Activated naive CD4-positive, alpha-beta T cell treated with anti-CD3 and anti-CD28 coated beads, Interleukin-2, amount 10 ng/mL, durations not matched to agents 7 days and 5 days (primary cell): ENCODE measurements at regions of chr4 and their contacts with region 1.

Region 1: DNA sequence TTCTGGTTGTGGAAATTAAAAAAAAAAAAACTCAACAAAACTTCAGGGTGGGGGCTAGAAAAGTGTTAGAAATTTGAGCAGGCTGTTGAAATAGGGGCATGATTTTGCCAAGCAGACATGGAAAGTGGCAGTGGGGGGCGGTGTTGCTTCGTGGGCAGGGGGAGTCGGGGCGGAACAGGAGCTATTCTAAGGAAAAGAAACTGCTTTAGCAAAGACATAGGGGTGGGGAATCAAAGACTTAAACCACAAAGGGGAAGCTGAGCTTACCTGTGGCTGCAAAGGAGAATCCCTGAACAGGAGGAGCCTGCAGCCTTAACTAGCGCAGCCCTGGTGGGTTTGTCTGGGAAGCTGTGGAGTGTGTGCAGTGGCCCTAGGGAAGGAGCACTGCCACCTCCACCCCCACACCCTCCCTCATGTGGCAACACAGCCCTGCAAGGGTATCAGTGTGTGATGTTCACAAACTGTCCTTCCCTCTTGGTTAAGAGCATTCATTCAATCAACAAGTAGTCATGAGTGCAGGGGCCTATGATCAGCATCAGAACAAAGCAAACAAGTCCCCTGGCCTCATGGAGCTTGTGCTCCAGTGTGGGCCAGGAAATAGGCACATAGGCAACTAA is 20.5 kb downstream of the SEL1L3 start:
- DNase-seq: peak; percentile 76
- H3K4me3 Mint-ChIP-seq: no peak overlapping the region
- H3K27ac Mint-ChIP-seq: peak overlapping the region; percentile 16
- H3K4me1 Mint-ChIP-seq: peaks cover 45% of the 10 kb centered on the region
- H3K27me3 Mint-ChIP-seq: no peaks in the 10 kb centered on the region

Region 2: GRCh38 chr4:25687773-25688172 is 154.6 kb before region 1 on chr4:
- CTCF ChIA-PET with region 1: no interaction called
- DNase-seq: no peak
- H3K4me3 Mint-ChIP-seq: no peak overlapping the region
- H3K27ac Mint-ChIP-seq: no peak overlapping the region
- H3K4me1 Mint-ChIP-seq: no peaks in the 10 kb centered on the region
- H3K27me3 Mint-ChIP-seq: peaks cover 4% of the 10 kb centered on the region

Region 3: GRCh38 chr4:25856756-25857155 is 14.4 kb after region 1 on chr4:
- CTCF ChIA-PET with region 1: interaction called, 10 read pairs
- DNase-seq: no peak
- H3K4me3 Mint-ChIP-seq: no peak overlapping the region
- H3K27ac Mint-ChIP-seq: peak overlapping the region; percentile 1
- H3K4me1 Mint-ChIP-seq: peaks cover 78% of the 10 kb centered on the region
- H3K27me3 Mint-ChIP-seq: no peaks in the 10 kb centered on the region